ENCODE measurements at regions of chr12 and their contacts with region 1.

Region 1: DNA sequence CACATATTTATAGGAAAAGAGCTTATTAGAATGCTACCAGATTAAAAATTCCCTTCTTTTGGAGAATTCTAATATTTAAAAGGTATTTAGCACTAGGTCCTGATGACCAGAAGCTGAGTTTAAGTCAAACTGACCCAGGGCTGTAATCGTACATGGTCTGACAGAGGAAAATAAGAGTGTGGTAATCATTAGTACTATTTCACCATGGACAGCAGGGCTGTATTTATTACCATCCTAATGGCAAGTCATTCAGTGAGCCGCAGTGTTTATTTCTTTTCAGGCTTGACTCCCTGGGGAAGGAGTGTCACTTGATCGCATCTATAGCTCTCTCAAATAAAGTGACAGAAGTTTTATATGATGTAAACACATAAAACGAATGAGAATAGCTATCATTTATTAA is 261.9 kb downstream of the BTG1 start:
- DNase-seq: no peak
- H3K4me3 ChIP-seq: no peak overlapping the region
- H3K27ac ChIP-seq: no peak overlapping the region
- H3K4me1 ChIP-seq: peaks cover 29% of the 10 kb centered on the region
- H3K27me3 ChIP-seq: no peaks in the 10 kb centered on the region
- CTCF ChIP-seq: no peak

Region 2: GRCh38 chr12:92078167-92079053 is 194.6 kb after region 1 on chr12:
- CTCF ChIA-PET with region 1: no interaction called
- POLR2A ChIA-PET with region 1: no interaction called
- intact Hi-C with region 1: loop called (anchors 1 kb)
- DNase-seq: peak; percentile 28 to 69
- H3K4me3 ChIP-seq: no peak overlapping the region
- H3K27ac ChIP-seq: peak overlapping the region; percentile 96
- H3K4me1 ChIP-seq: peaks cover 42% of the 10 kb centered on the region
- H3K27me3 ChIP-seq: no peaks in the 10 kb centered on the region
- CTCF ChIP-seq: no peak

Region 3: DNA sequence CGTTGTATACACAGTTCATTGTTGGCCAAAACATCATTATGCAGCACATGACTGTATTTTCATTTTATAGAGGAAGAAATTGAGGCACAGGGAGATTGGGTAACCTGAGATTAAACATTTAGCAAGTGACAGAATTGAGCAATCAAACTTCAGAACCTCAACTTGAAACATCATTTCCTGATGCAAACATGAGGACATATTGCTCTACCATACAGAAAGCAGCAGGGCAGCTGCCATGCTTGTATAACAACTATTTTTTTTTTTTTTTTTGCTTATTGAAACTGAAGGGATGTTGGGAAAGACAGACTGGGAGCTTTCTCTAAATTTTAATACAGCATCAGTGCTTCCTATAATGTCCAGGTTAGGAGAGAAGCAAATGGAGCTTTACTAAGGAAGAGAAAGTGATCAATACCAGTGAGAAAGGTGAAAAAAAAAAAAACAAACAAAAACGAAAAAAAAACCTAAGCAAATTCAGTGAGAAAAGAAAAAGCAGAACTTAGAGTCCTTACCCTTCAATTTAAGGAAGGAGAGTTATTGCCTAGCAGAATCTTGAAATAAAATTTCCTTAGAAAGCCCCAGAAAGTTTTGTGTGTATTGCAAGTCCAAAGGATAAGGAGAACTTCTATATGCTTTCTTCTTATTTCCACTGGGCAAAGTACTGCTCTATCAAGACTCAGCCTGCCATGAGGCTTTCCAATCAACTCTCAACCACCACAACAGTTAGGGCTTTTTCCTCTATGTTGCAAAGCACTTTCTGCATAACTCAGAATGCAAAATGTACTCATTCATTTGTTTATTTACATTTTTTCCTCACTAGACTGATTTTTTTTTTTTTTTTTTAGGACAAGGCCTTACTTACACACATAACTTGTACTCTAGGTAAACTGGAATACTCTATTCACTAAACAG is 240.3 kb after region 1 on chr12:
- CTCF ChIA-PET with region 1: interaction called, 14 read pairs
- POLR2A ChIA-PET with region 1: no interaction called
- intact Hi-C with region 1: no loop called
- DNase-seq: no peak
- H3K4me3 ChIP-seq: no peak overlapping the region
- H3K27ac ChIP-seq: no peak overlapping the region
- H3K4me1 ChIP-seq: 0 out of 2 replicates have a peak, but pooled peaks cover 7% of the 10 kb centered on the region
- H3K27me3 ChIP-seq: no peaks in the 10 kb centered on the region
- CTCF ChIP-seq: no peak